B cell (primary cell): ENCODE measurements at regions of chr16 and their contacts with region 1.

Region 1: GRCh38 chr16:1964506-1965395 is at the start of gene RPS2:
- DNase-seq: peak; percentile 99
- ATAC-seq: peak; percentile 93
- H3K4me3 ChIP-seq: peak within 1 kb of the TSS; percentile 60 to 94 (median 76)
- H3K4me3 Mint-ChIP-seq: peak within 1 kb of the TSS; percentile 94
- H3K27ac ChIP-seq: peak within 1 kb of the TSS; percentile 83 to 100
- H3K27ac Mint-ChIP-seq: peak within 1 kb of the TSS; percentile 97
- H3K4me1 ChIP-seq: peaks cover 26 to 49% of the 10 kb centered on the region in 2 donors
- H3K4me1 Mint-ChIP-seq: peaks cover 42% of the 10 kb centered on the region
- H3K27me3 ChIP-seq: no peaks in the 10 kb centered on the region
- H3K27me3 Mint-ChIP-seq: no peaks in the 10 kb centered on the region
- CTCF ChIP-seq: no peak
- total RNA-seq, gene RPS2: 3,155 and 3,261 TPM in 2 replicates

Region 2: GRCh38 chr16:1942810-1943726 is 21.7 kb before region 1 on chr16 and contains the start of gene MSRB1:
- CTCF ChIA-PET with region 1: interaction called, 6 read pairs
- POLR2A ChIA-PET with region 1: interaction called, 12 read pairs
- intact Hi-C with region 1: no loop called
- DNase-seq: peak; percentile 99
- ATAC-seq: peak; percentile 99
- H3K4me3 ChIP-seq: peak within 1 kb of the TSS; percentile 42 to 83 (median 73)
- H3K4me3 Mint-ChIP-seq: peak within 1 kb of the TSS; percentile 90
- H3K27ac ChIP-seq: peak within 1 kb of the TSS; percentile 25 to 64
- H3K27ac Mint-ChIP-seq: peak within 1 kb of the TSS; percentile 80
- H3K4me1 ChIP-seq: peaks cover 14 to 19% of the 10 kb centered on the region in 2 donors
- H3K4me1 Mint-ChIP-seq: peaks cover 21% of the 10 kb centered on the region
- H3K27me3 ChIP-seq: no peaks in the 10 kb centered on the region
- H3K27me3 Mint-ChIP-seq: no peaks in the 10 kb centered on the region
- CTCF ChIP-seq: no peak
- total RNA-seq, gene MSRB1: 15.2 and 17.5 TPM in 2 replicates

Region 3: DNA sequence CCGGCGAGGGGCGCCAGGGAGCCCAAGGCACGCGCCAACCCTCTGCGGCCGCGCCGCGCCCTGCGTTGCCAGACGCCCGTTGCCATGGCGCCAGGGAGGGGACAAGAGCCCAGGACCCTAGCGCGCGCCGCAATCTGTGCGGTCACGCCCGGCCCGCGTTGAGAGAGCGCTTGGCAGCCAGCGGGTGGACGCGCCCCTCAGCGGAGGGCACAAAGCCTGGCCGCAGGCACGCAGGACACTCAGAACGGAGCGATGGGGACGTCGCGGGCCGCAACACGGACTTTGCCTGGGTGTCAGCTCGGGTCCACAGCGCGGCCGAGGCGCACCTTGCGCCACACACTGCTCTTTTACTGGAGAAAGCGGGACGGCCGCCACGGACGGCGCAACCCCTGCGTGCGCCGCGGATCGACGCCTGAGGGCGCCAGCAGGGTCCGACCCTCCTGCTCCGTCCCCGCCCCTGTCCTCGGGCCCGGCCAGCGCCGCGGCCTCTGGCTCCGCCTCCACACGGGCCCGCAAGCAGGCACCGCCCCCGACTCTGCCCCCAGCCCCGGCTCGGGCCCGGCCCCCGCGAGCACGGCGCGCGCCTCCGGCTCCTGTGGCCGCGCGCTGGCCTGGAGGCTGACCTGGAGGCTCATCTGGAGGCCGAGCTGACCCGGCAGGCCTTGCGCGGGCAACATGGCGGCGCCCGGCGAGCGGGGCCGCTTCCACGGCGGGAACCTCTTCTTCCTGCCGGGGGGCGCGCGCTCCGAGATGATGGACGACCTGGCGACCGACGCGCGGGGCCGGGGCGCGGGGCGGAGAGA is 19.0 kb after region 1 on chr16 and contains the start of gene GFER:
- CTCF ChIA-PET with region 1: interaction called, 3 read pairs
- POLR2A ChIA-PET with region 1: interaction called, 15 read pairs
- intact Hi-C with region 1: no loop called
- DNase-seq: peak; percentile 88
- ATAC-seq: peak; percentile 94
- H3K4me3 ChIP-seq: peak within 1 kb of the TSS; percentile 3 to 78 (median 62)
- H3K4me3 Mint-ChIP-seq: peak within 1 kb of the TSS; percentile 88
- H3K27ac ChIP-seq: peak within 1 kb of the TSS; percentile 10 to 66
- H3K27ac Mint-ChIP-seq: peak within 1 kb of the TSS; percentile 83
- H3K4me1 ChIP-seq: peaks cover 16 to 35% of the 10 kb centered on the region in 2 donors
- H3K4me1 Mint-ChIP-seq: peaks cover 25% of the 10 kb centered on the region
- H3K27me3 ChIP-seq: peaks cover 0 to 39% (median 19%) of the 10 kb centered on the region in 4 experiments
- H3K27me3 Mint-ChIP-seq: peaks cover 6% of the 10 kb centered on the region
- CTCF ChIP-seq: peak; percentile 38
- total RNA-seq, gene GFER: 28.2 and 30.4 TPM in 2 replicates